ENCODE measurements at regions of chr5 and their contacts with region 1.

Region 1: GRCh38 chr5:217860-218456 is at the starts of genes CCDC127 and SDHA:
- DNase-seq: peak; percentile 98
- H3K4me3 Mint-ChIP-seq: peak within 1 kb of the TSS; percentile 92
- H3K27ac Mint-ChIP-seq: peak within 1 kb of the TSS; percentile 90
- H3K4me1 Mint-ChIP-seq: peaks cover 59% of the 10 kb centered on the region
- H3K27me3 Mint-ChIP-seq: no peaks in the 10 kb centered on the region
- total RNA-seq, gene CCDC127: 4.3 to 5.0 TPM
- total RNA-seq, gene SDHA: 142 to 143 TPM

Region 2: DNA sequence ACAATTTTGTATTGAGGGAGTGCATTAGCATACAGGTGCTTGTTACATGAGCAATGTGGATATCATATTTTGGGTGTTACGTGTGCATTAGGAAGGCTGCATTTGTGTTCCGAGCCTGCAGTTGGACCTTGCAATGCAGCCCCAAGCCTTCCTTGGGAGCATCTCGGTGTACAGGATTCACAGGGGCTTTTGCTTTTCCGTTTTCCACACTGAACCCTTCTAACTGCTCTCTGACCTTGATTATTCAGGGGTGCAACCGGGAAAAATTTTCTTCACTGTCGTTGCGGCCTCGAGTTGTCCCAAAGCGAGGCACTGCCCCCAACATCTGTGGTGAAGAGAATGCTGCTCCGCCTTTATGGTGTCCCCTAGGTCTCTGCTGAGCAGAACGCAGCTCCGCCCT is 206.1 kb before region 1 on chr5:
- CTCF ChIA-PET with region 1: no interaction called
- POLR2A ChIA-PET with region 1: no interaction called
- intact Hi-C with region 1: no loop called
- DNase-seq: no peak
- H3K4me3 Mint-ChIP-seq: no peak overlapping the region
- H3K27ac Mint-ChIP-seq: no peak overlapping the region
- H3K4me1 Mint-ChIP-seq: no peaks in the 10 kb centered on the region
- H3K27me3 Mint-ChIP-seq: no peaks in the 10 kb centered on the region

Region 3: DNA sequence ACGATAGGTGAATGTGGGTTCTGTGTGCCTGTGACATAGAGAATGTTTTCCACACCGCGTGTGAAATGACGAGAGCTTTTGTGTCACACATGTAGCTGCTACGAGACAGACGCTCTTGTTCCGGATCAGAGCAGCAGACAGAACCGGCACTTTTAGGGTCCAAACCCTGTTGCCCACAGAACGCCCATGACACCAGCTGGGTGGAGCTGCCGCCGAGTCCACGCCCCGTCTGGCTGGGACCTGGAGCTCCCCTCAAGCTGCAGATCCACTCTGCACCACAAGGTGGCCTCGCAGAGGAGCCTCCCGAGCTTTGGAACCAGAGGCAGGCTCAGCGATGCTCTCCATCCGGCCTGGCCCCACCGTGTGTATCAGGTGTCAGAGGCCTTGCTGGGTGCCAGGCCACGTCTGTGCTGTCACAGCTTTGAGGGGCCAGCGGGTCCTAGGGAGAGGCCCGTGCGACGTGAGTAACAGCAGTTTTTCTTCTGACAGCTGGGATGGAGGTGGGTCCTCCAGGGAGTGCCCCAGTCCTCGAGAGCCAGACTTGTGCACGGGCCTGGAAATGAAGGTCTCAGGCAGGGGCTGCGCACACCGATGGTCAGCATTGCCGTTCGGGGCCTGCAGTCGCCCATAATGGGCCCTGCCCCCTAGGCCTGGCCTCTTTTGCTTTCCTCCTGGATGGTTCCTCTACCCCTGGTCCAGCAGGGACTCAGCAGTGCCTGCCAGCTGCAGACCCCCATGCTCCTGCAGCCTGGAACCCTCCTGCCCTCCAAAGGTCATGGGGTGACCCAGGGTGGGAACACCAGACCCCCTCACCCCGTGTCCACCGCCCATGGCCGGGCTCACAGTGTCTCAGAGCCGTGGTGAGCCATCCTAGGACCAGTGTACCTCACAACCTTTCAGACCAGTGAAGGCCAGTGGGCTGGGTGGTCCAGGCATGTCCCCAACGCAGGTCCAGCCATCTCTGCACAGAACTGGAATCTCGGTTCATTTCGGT is 29.2 kb before region 1 on chr5:
- CTCF ChIA-PET with region 1: interaction called, 20 read pairs
- POLR2A ChIA-PET with region 1: interaction called, 4 read pairs
- intact Hi-C with region 1: loop called (anchors 2 kb)
- DNase-seq: peak; percentile 93
- H3K4me3 Mint-ChIP-seq: no peak overlapping the region
- H3K27ac Mint-ChIP-seq: peak overlapping the region; percentile 19
- H3K4me1 Mint-ChIP-seq: peaks cover 6% of the 10 kb centered on the region
- H3K27me3 Mint-ChIP-seq: peaks cover 3% of the 10 kb centered on the region

Region 4: GRCh38 chr5:199950-200645 is 17.9 kb before region 1 on chr5:
- CTCF ChIA-PET with region 1: no interaction called
- POLR2A ChIA-PET with region 1: no interaction called
- intact Hi-C with region 1: no loop called
- DNase-seq: no peak
- H3K4me3 Mint-ChIP-seq: no peak overlapping the region
- H3K27ac Mint-ChIP-seq: no peak overlapping the region
- H3K4me1 Mint-ChIP-seq: no peaks in the 10 kb centered on the region
- H3K27me3 Mint-ChIP-seq: no peaks in the 10 kb centered on the region

Region 5: DNA sequence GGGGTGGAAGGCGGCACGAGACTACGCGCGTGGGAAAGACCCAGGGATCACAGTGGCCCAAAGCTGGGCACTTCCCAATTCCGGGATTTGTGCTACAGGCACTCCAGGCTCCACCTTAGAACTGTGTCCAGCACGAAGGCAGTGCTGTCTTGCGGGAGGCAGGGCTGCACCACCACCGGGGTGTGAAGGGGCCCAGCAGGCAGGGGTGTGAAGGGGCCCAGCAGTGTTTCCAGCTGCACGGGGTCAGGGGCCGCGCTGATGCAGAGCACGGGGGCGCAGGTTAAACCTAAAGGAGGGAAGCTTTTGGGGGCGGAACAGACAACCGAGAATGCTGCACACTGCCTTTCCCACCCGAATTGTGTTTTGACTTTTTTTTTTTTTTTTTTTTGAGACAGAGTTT is 52.4 kb after region 1 on chr5:
- CTCF ChIA-PET with region 1: no interaction called
- POLR2A ChIA-PET with region 1: interaction called, 10 read pairs
- intact Hi-C with region 1: loop called (anchors 1 kb)
- DNase-seq: no peak
- H3K4me3 Mint-ChIP-seq: peak overlapping the region; percentile 85
- H3K27ac Mint-ChIP-seq: peak overlapping the region; percentile 42
- H3K4me1 Mint-ChIP-seq: peaks cover 44% of the 10 kb centered on the region
- H3K27me3 Mint-ChIP-seq: no peaks in the 10 kb centered on the region

Region 6: GRCh38 chr5:334903-335739 is 117.2 kb after region 1 on chr5:
- CTCF ChIA-PET with region 1: no interaction called
- POLR2A ChIA-PET with region 1: no interaction called
- intact Hi-C with region 1: loop called (anchors 5 kb)
- DNase-seq: no peak
- H3K4me3 Mint-ChIP-seq: peak overlapping the region; percentile 12
- H3K27ac Mint-ChIP-seq: peak overlapping the region; percentile 66
- H3K4me1 Mint-ChIP-seq: peaks cover 33% of the 10 kb centered on the region
- H3K27me3 Mint-ChIP-seq: peaks cover 7% of the 10 kb centered on the region

Region 7: DNA sequence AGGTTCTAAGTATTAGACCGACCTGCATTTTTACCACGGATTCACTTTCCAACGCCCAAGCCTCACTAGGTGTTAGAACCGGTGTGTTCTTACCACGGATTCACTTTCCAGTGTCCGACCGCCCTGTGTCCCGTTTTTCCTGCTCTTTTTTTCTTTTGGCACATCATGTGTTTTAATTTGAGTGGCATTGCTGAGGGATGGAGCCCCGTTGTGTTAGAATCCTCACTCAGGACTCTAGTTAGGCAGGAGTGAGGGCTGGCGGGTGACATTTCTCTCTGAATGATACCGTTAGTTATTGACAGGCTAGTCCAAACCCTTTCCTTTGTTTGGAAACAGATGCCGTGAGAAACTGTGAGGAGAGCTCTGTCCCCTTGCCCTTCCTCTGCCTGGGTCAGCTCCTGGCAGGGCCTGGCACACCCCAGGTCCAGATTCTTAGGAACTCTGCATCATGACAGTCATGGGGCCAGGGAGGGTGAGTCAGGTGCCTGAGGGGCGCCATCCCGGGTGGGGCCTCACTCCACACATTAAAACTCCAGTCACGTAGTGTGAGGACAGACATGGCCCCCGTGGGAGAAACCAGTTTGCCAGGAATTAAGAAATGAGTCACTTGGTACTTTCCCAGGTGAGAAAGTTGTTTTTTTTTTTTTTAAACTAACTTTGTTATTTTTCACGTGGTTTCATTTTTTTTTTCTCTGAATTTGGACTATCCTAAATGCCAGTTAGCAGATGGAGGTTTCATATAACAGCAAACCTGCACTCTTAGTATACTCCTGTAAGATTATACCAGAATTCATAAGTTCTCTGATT is 240.8 kb after region 1 on chr5:
- CTCF ChIA-PET with region 1: no interaction called
- POLR2A ChIA-PET with region 1: no interaction called
- intact Hi-C with region 1: loop called (anchors 10 kb)
- DNase-seq: peak; percentile 85
- H3K4me3 Mint-ChIP-seq: peak overlapping the region; percentile 47
- H3K27ac Mint-ChIP-seq: peak overlapping the region; percentile 94
- H3K4me1 Mint-ChIP-seq: peaks cover 59% of the 10 kb centered on the region
- H3K27me3 Mint-ChIP-seq: no peaks in the 10 kb centered on the region

Region 8: DNA sequence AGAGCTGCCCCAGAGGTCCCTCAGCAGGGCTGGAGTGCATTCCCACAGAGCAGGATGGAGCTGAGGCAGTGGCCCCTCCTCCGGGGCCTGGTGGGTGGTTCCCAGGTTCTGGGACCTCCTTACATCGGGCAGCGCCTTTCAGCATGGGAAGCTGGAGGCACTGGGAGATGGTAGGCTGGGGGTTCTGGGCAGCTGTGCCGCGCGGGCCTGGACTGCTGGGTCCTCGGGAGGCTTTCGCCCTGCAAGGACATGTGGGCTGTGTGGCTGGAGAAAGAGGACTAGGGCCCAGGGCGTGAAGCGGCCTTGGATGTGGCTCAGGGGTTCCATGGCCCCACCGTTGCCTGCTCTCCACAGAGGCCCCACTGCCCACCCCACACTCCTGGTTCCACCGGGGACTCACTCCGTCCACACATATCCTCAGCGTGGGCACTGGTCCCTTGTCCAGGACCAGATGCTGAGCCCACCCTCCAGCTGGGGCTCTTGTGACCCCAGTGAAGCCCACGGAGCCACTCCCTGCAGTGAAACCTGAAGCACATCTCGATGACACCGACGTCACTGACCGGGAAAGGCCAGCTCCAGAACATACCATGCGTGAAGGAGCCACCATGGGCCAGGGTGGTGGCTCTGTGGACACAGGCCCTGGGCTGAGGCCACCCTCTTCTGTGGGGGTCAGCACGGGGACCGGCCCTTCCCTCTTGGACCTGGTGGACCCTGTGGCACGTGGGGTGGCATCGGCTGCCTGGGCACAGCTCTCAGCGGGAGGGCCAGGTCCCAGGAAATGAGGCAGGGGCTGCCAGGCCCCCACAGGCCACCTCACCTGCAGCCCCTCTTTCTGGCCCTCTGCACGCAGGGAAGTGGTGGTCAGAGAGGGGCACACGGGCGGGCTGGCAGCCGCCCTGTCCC is 759.1 kb after region 1 on chr5:
- CTCF ChIA-PET with region 1: no interaction called
- POLR2A ChIA-PET with region 1: no interaction called
- intact Hi-C with region 1: no loop called
- DNase-seq: no peak
- H3K4me3 Mint-ChIP-seq: no peak overlapping the region
- H3K27ac Mint-ChIP-seq: no peak overlapping the region
- H3K4me1 Mint-ChIP-seq: no peaks in the 10 kb centered on the region
- H3K27me3 Mint-ChIP-seq: peaks cover 5% of the 10 kb centered on the region

Measured in activated CD4-positive, alpha-beta memory T cell treated with anti-CD3 and anti-CD28 coated beads for 36 hours (primary cell).